B cell (primary cell): ENCODE measurements at regions of chr17 and their contacts with region 1.

Region 1: DNA sequence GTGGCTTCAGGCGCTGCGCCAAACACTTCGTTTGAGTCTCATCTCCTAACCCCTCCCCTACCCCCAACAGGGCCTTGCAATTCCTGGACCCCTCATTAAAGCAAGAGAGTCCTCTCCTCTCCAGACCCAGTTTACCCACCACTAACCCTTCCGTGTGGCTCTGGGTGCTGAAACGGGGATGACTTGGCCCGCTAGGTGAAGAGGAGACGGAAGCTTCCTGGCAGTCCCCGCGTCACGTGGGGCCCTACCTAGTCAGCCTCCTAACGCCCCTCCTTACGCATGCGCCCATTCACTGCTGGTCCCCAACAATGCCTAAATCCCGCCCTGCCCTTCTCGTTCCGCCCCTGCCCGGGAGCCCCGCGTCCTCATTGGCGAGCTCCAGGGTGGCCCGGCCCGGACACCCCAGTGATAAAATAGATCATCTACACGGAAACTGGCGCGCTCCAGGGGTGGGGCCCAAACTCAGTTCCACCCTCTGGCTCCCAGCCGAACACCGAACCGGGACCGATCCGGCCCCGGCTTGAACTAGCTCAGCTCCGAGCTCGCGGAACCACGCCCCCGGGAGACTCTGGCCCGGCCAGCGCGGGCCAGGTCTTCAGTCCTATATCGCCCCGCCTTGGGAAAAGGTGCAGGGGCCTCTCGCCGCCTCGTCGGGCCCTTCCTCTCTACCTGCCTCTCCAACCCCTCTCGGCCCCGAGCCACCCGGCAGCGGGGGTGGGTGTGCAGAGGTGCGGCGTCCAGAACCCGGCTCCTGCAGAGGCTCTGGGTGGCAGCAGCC is at the start of gene SLC16A13:
- DNase-seq: peak; percentile 99
- ATAC-seq: peak; percentile 94
- H3K4me3 ChIP-seq: peak within 1 kb of the TSS; percentile 58 to 97 (median 88)
- H3K4me3 Mint-ChIP-seq: peak within 1 kb of the TSS; percentile 94
- H3K27ac ChIP-seq: peak within 1 kb of the TSS; percentile 86 to 100
- H3K27ac Mint-ChIP-seq: peak within 1 kb of the TSS; percentile 98
- H3K4me1 ChIP-seq: peaks cover 18 to 38% of the 10 kb centered on the region in 2 donors
- H3K4me1 Mint-ChIP-seq: peaks cover 42% of the 10 kb centered on the region
- H3K27me3 ChIP-seq: no peaks in the 10 kb centered on the region
- H3K27me3 Mint-ChIP-seq: no peaks in the 10 kb centered on the region
- CTCF ChIP-seq: no peak
- total RNA-seq, gene SLC16A13: 21.7 and 21.9 TPM in 2 replicates

Region 2: GRCh38 chr17:5838646-5839300 is 1197.0 kb before region 1 on chr17:
- CTCF ChIA-PET with region 1: no interaction called
- POLR2A ChIA-PET with region 1: no interaction called
- intact Hi-C with region 1: no loop called
- DNase-seq: no peak
- ATAC-seq: no peak
- H3K4me3 ChIP-seq: no peak overlapping the region
- H3K4me3 Mint-ChIP-seq: no peak overlapping the region
- H3K27ac ChIP-seq: no peak overlapping the region
- H3K27ac Mint-ChIP-seq: no peak overlapping the region
- H3K4me1 ChIP-seq: peaks cover 0 to 3% of the 10 kb centered on the region in 2 donors
- H3K4me1 Mint-ChIP-seq: peaks cover 10% of the 10 kb centered on the region
- H3K27me3 ChIP-seq: no peaks in the 10 kb centered on the region
- H3K27me3 Mint-ChIP-seq: peaks cover 6% of the 10 kb centered on the region
- CTCF ChIP-seq: no peak

Region 3: DNA sequence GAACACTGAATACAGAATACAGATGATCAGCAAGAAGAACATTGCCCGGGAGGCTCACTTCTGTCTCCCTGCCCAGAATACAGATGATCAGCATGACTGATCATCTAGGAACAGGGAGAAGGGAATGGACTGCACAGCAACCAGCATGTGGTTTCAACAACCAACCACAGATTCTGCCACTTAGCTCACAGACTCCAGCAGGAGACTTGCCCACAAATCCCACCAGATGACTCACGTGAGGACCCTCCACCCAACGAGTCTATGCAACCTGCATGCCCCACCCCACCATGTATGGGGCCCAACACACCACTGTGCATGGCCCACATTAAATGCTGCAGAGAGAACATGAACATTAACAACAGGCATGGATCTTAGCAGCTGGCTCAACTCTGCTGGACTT is 76.1 kb before region 1 on chr17:
- CTCF ChIA-PET with region 1: no interaction called
- POLR2A ChIA-PET with region 1: no interaction called
- intact Hi-C with region 1: no loop called
- DNase-seq: no peak
- ATAC-seq: no peak
- H3K4me3 ChIP-seq: no peak overlapping the region
- H3K4me3 Mint-ChIP-seq: no peak overlapping the region
- H3K27ac ChIP-seq: no peak overlapping the region
- H3K27ac Mint-ChIP-seq: no peak overlapping the region
- H3K4me1 ChIP-seq: no peaks in the 10 kb centered on the region
- H3K4me1 Mint-ChIP-seq: no peaks in the 10 kb centered on the region
- H3K27me3 ChIP-seq: no peaks in the 10 kb centered on the region
- H3K27me3 Mint-ChIP-seq: peaks cover 12% of the 10 kb centered on the region
- CTCF ChIP-seq: no peak

Region 4: DNA sequence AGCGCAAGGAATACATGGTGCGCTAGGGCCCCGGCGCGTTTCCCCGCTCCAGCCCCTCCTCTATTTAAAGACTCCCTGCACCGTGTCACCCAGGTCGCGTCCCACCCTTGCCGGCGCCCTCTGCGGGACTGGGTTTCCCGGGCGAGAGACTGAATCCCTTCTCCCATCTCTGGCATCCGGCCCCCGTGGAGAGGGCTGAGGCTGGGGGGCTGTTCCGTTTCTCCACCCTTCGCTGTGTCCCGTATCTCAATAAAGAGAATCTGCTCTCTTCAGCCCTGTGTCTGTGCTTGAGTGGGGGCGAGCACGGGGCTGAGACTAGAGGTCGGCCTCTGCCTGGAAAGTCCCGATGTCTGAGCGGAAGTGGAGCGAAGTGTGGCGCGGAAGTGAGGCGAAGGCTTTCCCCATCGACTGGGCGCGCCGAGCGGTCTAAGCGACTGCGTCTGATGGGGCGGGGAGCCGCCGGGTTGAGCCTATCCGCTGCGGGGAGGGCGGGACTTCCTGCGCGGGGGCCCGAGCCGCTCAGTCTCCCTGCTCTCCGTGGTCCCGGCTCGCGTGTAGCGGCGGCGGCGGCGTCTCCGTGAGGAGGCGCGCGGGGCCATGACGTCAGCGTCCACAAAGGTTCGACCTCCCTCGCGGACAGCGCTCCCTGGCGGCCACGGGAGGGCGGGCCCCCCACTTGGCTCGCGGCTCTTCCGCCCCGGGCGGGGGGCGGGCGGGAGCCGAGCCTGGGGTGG is 21.4 kb before region 1 on chr17:
- CTCF ChIA-PET with region 1: interaction called, 5 read pairs
- POLR2A ChIA-PET with region 1: interaction called, 9 read pairs
- intact Hi-C with region 1: loop called (anchors 1 kb)
- DNase-seq: peak; percentile 99
- ATAC-seq: peak; percentile 81
- H3K4me3 ChIP-seq: peak overlapping the region; percentile 95 to 100 (median 96)
- H3K4me3 Mint-ChIP-seq: peak overlapping the region; percentile 99
- H3K27ac ChIP-seq: peak overlapping the region; percentile 97 to 99
- H3K27ac Mint-ChIP-seq: peak overlapping the region; percentile 100
- H3K4me1 ChIP-seq: peaks cover 40 to 59% of the 10 kb centered on the region in 2 donors
- H3K4me1 Mint-ChIP-seq: peaks cover 54% of the 10 kb centered on the region
- H3K27me3 ChIP-seq: no peaks in the 10 kb centered on the region
- H3K27me3 Mint-ChIP-seq: no peaks in the 10 kb centered on the region
- CTCF ChIP-seq: peak; percentile 76

Region 5: GRCh38 chr17:7021993-7022778 is 13.6 kb before region 1 on chr17:
- CTCF ChIA-PET with region 1: interaction called, 20 read pairs
- POLR2A ChIA-PET with region 1: interaction called, 26 read pairs
- intact Hi-C with region 1: loop called (anchors 1 kb)
- DNase-seq: peak; percentile 92
- ATAC-seq: peak; percentile 82
- H3K4me3 ChIP-seq: peak overlapping the region in 4 of 5 experiments; percentile 44 to 71 (median 62)
- H3K4me3 Mint-ChIP-seq: peak overlapping the region; percentile 82
- H3K27ac ChIP-seq: peak overlapping the region; percentile 73 to 80
- H3K27ac Mint-ChIP-seq: peak overlapping the region; percentile 92
- H3K4me1 ChIP-seq: peaks cover 21 to 27% of the 10 kb centered on the region in 2 donors
- H3K4me1 Mint-ChIP-seq: peaks cover 28% of the 10 kb centered on the region
- H3K27me3 ChIP-seq: no peaks in the 10 kb centered on the region
- H3K27me3 Mint-ChIP-seq: no peaks in the 10 kb centered on the region
- CTCF ChIP-seq: peak; percentile 98

Region 6: DNA sequence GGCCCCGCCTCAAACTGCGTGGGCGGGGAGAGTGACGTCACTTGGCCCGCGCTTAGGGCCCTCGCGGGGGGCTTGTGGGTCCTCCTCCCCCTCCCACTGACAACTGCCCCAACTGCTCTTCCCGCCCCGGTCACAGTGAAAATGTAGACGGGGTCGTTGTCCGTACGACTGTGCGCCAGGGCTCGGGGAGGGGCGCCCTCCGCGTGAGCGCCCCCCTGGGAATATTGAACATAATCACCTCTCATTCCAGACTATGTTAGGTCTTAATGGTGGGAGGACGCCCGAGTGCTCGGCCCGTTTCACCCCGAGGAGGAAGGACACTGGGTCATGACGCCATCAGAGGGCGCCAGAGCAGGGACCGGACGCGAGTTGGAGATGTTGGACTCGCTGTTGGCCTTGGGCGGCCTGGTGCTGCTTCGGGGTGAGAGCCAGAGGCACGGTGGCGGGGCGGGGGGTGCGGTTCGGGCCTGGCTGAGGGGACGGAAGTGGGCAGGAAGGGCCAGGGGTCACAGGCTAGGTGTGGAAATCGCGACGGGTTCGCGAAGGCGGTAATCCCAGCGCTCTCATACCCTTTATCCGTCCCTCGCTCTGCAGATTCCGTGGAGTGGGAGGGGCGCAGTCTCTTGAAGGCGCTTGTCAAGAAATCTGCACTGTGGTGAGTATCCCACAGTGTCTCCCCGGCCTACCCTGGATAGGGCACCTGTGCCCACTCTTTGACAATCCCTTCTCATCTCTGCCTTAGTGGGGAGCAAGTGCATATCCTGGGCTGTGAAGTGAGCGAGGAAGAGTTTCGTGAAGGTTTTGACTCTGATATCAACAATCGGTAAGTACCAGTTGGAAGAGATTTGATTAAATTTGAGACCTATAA is 216.6 kb after region 1 on chr17 and contains the start of gene ELP5:
- CTCF ChIA-PET with region 1: no interaction called
- POLR2A ChIA-PET with region 1: no interaction called
- intact Hi-C with region 1: no loop called
- DNase-seq: peak; percentile 100
- ATAC-seq: peak; percentile 64
- H3K4me3 ChIP-seq: peak within 1 kb of the TSS; percentile 69 to 90 (median 78)
- H3K4me3 Mint-ChIP-seq: peak within 1 kb of the TSS; percentile 98
- H3K27ac ChIP-seq: peak within 1 kb of the TSS; percentile 98 to 100
- H3K27ac Mint-ChIP-seq: peak within 1 kb of the TSS; percentile 100
- H3K4me1 ChIP-seq: peaks cover 30 to 33% of the 10 kb centered on the region in 2 donors
- H3K4me1 Mint-ChIP-seq: peaks cover 44% of the 10 kb centered on the region
- H3K27me3 ChIP-seq: no peaks in the 10 kb centered on the region
- H3K27me3 Mint-ChIP-seq: no peaks in the 10 kb centered on the region
- CTCF ChIP-seq: no peak
- total RNA-seq, gene ELP5: 42.2 and 48.0 TPM in 2 replicates